PC-9 (cell line): ENCODE measurements at regions of chr11 and their contacts with region 1.

Region 1: GRCh38 chr11:82867495-82868082 is 32.6 kb downstream of the PRCP start:
- DNase-seq: peak; percentile 48 to 69
- H3K4me3 ChIP-seq: no peak overlapping the region
- H3K27ac ChIP-seq: no peak overlapping the region
- H3K4me1 ChIP-seq: no peaks in the 10 kb centered on the region
- H3K27me3 ChIP-seq: no peaks in the 10 kb centered on the region
- CTCF ChIP-seq: peak; percentile 94

Region 2: DNA sequence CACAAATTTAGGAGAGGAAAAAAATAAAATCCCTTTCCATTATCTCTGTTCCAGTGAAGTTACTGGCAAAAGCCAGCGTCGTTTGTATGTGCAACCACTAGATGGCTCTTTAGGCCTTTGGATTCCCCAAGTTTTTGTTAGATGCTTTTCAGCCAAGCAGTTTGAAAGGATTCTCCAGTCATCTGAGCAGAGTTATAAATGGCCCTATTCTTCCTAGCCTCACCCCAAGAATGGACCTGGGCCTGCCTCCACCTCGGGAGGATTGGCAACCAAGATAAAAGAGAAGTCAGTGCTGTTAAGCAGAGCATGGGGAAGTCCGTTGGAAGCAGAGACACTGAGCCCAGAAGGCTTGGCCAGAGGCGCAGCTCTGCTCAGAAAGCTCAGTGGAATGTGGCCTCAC is 149.3 kb before region 1 on chr11:
- CTCF ChIA-PET with region 1: no interaction called
- POLR2A ChIA-PET with region 1: no interaction called
- intact Hi-C with region 1: loop called (anchors 1 kb)
- DNase-seq: peak; percentile 32 to 53
- H3K4me3 ChIP-seq: no peak overlapping the region
- H3K27ac ChIP-seq: no peak overlapping the region
- H3K4me1 ChIP-seq: no peaks in the 10 kb centered on the region
- H3K27me3 ChIP-seq: peaks cover 7% of the 10 kb centered on the region; the same call in 1 of the 2 replicates
- CTCF ChIP-seq: peak; percentile 92

Region 3: DNA sequence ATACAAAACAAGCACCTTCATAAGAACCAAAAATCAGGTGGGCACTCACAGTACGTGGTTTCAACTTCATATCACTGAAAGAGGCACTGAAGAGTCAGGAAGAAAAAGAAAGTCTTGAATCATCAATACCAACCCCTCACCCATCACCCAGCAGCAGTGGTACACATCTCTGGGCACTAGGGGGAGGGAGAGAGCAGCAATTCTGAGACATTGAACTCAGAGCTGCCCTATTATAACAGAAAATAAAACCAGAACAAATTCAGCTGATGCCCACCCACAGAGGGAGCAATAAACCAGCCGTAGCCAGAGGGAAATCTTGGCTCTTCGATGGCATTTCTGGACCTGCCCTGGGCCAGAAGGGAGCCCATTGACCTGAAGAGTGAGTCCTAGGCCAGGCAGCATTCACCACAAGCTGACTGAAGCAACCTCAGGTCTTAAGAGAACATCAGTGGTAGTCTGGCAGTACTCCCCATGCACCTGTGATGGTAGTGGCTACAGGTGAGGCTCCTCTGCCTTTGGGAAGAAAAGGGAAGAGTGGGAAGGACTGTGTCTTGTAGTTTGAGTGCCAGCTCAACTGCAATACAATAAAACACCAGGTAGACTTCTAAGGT is 91.7 kb before region 1 on chr11:
- CTCF ChIA-PET with region 1: interaction called, 6 read pairs
- POLR2A ChIA-PET with region 1: no interaction called
- intact Hi-C with region 1: loop called (anchors 1 kb)
- DNase-seq: peak; percentile 44 to 50
- H3K4me3 ChIP-seq: no peak overlapping the region
- H3K27ac ChIP-seq: no peak overlapping the region
- H3K4me1 ChIP-seq: no peaks in the 10 kb centered on the region
- H3K27me3 ChIP-seq: no peaks in the 10 kb centered on the region
- CTCF ChIP-seq: peak; percentile 89

Region 4: DNA sequence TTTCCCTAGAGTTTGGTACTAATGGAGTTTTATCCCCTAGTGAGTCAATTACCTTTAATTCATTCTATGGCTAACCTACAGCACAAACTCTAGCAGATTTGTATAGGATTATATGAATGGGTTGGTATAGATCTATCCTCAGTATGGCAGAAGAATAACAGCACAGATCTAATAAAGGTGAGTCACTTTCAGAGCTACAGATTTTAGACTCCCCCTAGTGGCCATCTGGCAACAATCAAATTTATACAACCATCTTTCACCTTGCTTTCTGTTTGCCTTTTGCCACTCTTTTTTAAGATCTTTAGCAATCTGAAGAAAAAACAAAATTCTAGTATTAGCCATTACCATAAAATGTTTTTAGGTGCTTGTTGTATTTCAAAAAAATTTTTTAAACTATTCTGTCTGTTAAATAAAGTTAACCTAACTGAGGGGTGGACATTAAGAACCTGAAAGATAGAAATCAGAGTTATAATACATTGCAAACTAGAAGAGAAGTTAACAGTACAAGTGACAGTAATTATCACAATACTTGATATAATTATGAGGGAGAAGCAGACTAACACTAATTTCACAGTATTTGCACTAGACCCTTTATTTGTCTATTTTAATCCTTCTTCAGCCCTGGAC is 59.8 kb after region 1 on chr11:
- CTCF ChIA-PET with region 1: interaction called, 3 read pairs
- POLR2A ChIA-PET with region 1: no interaction called
- intact Hi-C with region 1: loop called (anchors 1 kb)
- DNase-seq: peak; percentile 5 to 60
- H3K4me3 ChIP-seq: no peak overlapping the region
- H3K27ac ChIP-seq: no peak overlapping the region
- H3K4me1 ChIP-seq: no peaks in the 10 kb centered on the region
- H3K27me3 ChIP-seq: no peaks in the 10 kb centered on the region
- CTCF ChIP-seq: peak; percentile 97

Region 5: DNA sequence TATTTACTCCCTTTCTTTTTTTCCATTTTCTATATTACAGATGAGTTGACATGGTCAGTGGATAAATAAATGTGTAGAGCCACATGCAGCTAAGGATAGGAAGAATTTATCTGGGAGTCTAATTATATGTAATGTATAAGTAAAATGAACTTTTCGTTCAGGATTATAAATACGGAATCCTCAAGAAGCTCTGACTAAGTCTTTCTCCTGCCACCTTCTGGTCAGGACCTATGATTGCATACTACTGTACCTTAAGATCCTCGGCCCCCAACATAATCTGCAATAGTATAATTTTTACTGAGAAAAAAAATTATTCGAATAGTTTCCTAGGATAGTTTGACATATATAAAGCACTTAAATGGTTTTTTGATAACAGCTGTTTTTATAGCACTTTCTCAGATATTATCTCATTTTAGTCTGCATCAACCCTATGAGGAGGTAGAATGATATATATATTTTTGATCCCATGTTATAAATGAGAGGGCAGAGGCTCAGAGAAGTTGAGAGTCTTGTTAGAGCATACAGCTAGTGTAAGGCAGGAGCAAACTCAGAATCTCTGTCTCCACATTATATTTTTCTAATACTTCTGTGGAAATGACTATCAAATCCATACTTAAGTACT is 382.5 kb after region 1 on chr11:
- CTCF ChIA-PET with region 1: interaction called, 3 read pairs
- POLR2A ChIA-PET with region 1: no interaction called
- intact Hi-C with region 1: loop called (anchors 2 kb)
- DNase-seq: peak in 1 of 2 experiments; percentile 59
- H3K4me3 ChIP-seq: no peak overlapping the region
- H3K27ac ChIP-seq: no peak overlapping the region
- H3K4me1 ChIP-seq: peaks cover 1% of the 10 kb centered on the region
- H3K27me3 ChIP-seq: no peaks in the 10 kb centered on the region
- CTCF ChIP-seq: peak; percentile 83